ENCODE measurements at regions of chr5 and their contacts with region 1.

Region 1: GRCh38 chr5:132073231-132074013 is at the start of gene CSF2:
- DNase-seq: no peak
- ATAC-seq: peak in 1 of 2 experiments; percentile 44; a peak in 3 of 6 replicates
- H3K4me3 ChIP-seq: no peak within 1 kb of the TSS
- H3K27ac ChIP-seq: peak within 1 kb of the TSS in 1 of 2 experiments; percentile 61; a peak in 2 of 6 replicates
- H3K4me1 ChIP-seq: peaks cover 11% of the 10 kb centered on the region; the same call in 2 of the 3 replicates
- CTCF ChIP-seq: no peak
- EP300 ChIP-seq: no peak
- POLR2A ChIP-seq: no peak
- RAD21 ChIP-seq: no peak
- polyA plus RNA-seq, gene CSF2: 0.21 TPM in 1 of 2 replicates, not detected in the other

Region 2: DNA sequence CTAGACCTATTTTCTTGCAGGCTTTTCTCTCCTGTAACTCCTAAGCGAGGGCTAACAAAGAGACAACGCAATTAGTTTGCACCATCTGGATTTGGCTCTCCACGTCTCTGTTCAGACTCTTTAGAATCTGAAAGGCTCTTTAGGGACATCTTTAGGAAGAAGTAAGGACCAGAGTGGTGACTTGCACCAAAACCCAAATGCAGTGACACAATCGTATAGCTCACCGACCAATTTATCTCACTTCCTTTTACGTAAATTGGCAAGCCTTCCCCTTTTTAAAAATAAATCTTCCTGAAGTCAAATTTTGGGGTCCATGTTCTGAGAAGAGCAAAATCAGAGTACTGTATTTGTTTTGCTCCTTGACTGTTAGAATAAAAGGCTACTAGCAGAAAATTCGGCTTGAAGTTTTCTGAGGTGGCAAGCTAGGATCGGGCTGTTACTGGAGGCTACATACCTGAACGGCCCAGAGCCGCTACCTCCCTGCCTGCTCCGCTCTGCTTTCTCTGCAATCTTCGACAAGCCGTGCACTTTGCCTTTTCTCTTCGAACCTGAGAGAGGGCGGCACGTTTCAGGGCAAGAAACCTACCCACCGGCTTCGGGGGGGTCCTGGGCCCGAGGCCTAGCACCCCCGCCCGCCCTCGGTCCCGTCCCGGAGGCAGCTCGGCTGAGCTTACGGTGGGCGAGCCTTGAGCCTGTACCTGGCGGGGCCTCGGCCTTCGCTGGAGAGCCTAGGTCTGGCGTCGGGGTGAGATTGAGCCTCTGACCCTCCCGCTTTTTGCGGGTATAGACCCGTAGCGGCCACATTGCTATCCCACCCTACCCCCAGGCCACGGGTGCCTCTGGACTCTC is 128.5 kb before region 1 on chr5:
- CTCF ChIA-PET with region 1: no interaction called
- POLR2A ChIA-PET with region 1: no interaction called
- DNase-seq: no peak
- ATAC-seq: no peak
- H3K4me3 ChIP-seq: no peak overlapping the region
- H3K27ac ChIP-seq: no peak overlapping the region
- H3K4me1 ChIP-seq: no peaks in the 10 kb centered on the region
- CTCF ChIP-seq: no peak
- EP300 ChIP-seq: no peak
- POLR2A ChIP-seq: no peak
- RAD21 ChIP-seq: no peak

Region 3: GRCh38 chr5:132190161-132190817 is 116.9 kb after region 1 on chr5:
- CTCF ChIA-PET with region 1: interaction called, 11 read pairs
- POLR2A ChIA-PET with region 1: no interaction called
- DNase-seq: peak; percentile 80 to 85
- ATAC-seq: peak; percentile 100
- H3K4me3 ChIP-seq: no peak overlapping the region
- H3K27ac ChIP-seq: no peak overlapping the region
- H3K4me1 ChIP-seq: no peaks in the 10 kb centered on the region
- CTCF ChIP-seq: peak; percentile 59
- EP300 ChIP-seq: no peak
- POLR2A ChIP-seq: no peak
- RAD21 ChIP-seq: peak; percentile 29 to 51; a peak in 2 of 5 replicates